Gastrocnemius medialis (tissue), 4 donors: ENCODE measurements at regions of chr2 and their contacts with region 1.

Region 1: DNA sequence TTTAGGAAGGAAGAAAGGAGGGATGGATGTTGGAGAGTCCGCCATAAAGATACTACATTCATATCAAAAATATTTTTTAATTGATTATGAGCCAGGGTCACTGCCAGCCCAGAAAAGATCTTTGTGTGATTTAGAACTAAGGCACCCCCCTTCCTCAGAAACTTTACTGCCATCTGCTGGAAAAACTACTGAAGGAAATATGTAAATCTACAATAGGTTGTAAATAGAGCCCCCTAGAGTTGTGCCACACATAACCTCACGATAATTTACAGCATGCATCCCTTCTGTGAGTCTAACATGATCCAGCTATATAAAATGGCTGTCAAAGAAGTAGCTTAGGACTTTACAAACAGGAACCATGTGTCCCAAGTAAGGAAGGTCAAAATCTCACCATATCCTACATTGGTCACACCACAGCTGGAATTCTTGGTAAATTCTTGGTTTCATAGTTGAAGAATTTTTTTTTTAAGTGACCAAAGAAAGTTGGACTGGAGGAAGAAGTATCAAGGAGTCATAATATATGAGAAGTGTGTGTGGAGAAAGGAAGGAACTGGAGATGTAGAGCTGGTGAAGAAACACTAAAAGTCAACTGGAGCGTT is 152.5 kb downstream of the CYP26B1 start:
- DNase-seq: no peak
- ATAC-seq: peak; percentile 23 to 82
- H3K4me3 ChIP-seq: no peak overlapping the region
- H3K27ac ChIP-seq: no peak overlapping the region
- H3K4me1 ChIP-seq: no peaks in the 10 kb centered on the region
- H3K27me3 ChIP-seq: no peaks in the 10 kb centered on the region
- CTCF ChIP-seq: peak; percentile 63 to 79 (median 69)
- POLR2A ChIP-seq: no peak

Region 2: DNA sequence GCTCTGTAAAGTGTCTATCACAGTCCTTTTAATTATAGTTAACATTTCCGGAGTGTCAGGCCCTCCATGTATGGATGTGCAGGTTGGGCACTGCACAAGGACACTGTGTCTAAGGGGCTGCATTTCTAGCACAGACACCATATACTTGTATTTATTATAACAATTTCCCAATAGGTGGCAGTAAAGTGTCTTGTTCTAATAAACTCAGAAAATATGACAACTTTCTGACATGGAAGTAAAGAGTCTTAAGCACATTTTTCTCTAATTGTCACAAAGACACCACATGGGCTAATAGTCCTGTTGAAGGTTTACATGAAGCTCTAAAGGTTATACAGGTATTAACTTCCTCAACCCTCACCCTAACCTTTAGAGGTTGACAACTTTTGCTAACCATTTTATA is 385.2 kb before region 1 on chr2:
- in situ Hi-C with region 1: no loop called
- intact Hi-C with region 1: loop called (anchors 10 kb)
- DNase-seq: no peak
- ATAC-seq: peak; percentile 38 to 50
- H3K4me3 ChIP-seq: no peak overlapping the region
- H3K27ac ChIP-seq: peak overlapping the region; percentile 5 to 45 (median 15)
- H3K4me1 ChIP-seq: peaks cover 16% of the 10 kb centered on the region in 2 donors
- H3K27me3 ChIP-seq: no peaks in the 10 kb centered on the region
- CTCF ChIP-seq: peak in 2 of 5 experiments; percentile 27 to 29
- POLR2A ChIP-seq: no peak

Region 3: GRCh38 chr2:71873594-71873993 is 121.6 kb before region 1 on chr2:
- in situ Hi-C with region 1: no loop called
- intact Hi-C with region 1: loop called (anchors 5 kb)
- DNase-seq: no peak
- ATAC-seq: no peak
- H3K4me3 ChIP-seq: no peak overlapping the region
- H3K27ac ChIP-seq: peak overlapping the region in 1 of 4 donors; percentile 37
- H3K4me1 ChIP-seq: peaks cover 0 to 6% of the 10 kb centered on the region in 2 donors
- H3K27me3 ChIP-seq: no peaks in the 10 kb centered on the region
- CTCF ChIP-seq: no peak
- POLR2A ChIP-seq: no peak